Activated CD8-positive, alpha-beta memory T cell treated with anti-CD3 and anti-CD28 coated beads, Interleukin-2, amount 10 ng/mL, durations not matched to agents 7 days and 5 days (primary cell): ENCODE measurements at regions of chr11 and their contacts with region 1.

Region 1: DNA sequence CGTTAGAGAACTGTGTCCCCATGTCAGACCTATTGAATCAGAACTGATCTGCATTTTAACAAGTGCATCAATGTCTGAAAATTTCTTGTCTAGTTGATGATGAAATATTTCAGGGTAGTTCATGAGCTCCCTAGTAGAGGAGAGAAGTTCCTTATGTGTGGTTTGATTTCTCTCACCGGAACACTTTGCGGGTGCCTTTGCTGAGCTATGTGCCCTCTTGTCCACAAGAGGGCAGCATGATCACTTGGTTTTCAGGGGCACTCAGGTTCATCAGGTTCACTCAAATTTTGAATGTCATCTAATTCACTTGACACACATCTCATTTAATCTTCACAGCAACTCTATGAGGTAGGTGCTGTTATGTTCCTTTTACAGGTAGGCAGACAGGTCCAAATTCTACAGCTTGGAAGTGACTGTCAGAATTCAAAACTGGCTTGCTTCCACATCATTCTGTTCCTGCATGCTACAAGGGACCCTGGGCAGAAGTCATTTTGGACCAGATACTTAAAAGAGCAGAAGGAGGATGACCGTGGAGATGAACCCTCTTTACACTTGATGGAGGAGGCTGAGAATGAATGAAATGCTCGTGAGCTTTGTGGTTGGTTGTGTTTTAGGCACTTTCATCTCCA is 55.6 kb downstream of the P4HA3 start:
- DNase-seq: peak; percentile 62
- ATAC-seq: peak; percentile 63
- H3K4me3 Mint-ChIP-seq: no peak overlapping the region
- H3K27ac Mint-ChIP-seq: no peak overlapping the region
- H3K4me1 Mint-ChIP-seq: no peaks in the 10 kb centered on the region
- H3K27me3 Mint-ChIP-seq: no peaks in the 10 kb centered on the region

Region 2: DNA sequence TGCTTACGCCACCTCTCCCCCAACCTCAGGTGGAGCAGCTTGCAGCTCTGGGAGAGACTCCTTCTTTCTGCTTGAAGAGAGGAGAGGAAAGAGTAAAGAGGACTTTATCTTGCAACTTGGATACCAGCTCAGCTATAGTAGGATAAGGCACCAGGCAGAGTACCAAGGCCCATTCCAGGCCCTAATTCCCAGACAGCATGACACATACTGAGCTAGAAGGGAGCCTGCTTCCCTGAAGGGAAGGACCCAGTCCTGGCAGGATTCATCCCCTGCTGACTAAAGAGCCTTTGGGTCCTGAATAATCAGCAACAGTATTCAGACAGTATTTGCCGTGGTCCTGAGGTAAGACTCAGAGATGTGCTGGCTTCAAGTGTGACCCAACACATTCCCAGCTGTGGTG is 43.3 kb before region 1 on chr11:
- CTCF ChIA-PET with region 1: no interaction called
- DNase-seq: no peak
- ATAC-seq: no peak
- H3K4me3 Mint-ChIP-seq: no peak overlapping the region
- H3K27ac Mint-ChIP-seq: no peak overlapping the region
- H3K4me1 Mint-ChIP-seq: no peaks in the 10 kb centered on the region
- H3K27me3 Mint-ChIP-seq: no peaks in the 10 kb centered on the region

Region 3: DNA sequence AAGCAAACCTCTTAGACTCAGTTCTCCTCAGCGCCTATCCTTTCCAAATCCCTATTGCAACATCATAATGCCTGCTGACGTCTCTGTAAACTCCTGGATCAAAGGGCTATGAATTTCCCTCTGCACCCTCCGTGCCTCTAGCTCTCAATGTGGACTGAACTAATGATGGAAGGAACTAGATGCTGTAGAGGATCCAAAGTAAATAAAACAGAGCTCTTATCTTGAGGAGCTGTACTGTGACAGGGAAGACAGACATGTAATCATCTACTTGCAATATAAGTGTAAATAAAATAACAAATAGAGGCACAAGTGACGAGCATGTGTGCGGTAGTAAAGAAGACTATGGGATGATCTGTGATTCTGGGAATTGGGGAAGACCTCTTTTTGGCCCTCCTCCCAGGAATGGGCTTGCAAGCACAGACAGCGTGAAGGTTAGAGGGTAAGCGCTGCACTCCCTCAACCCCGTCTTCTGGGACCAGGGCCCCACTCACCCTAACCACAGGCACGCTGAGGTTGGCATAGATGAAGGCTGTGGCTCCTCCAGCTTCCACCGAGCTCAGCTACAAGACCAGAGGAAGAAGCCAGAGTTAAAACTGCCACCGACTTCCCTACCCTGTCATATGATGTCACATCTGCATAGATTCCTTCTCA is 13.4 kb after region 1 on chr11:
- CTCF ChIA-PET with region 1: interaction called, 10 read pairs
- DNase-seq: peak; percentile 54
- ATAC-seq: peak; percentile 53
- H3K4me3 Mint-ChIP-seq: no peak overlapping the region
- H3K27ac Mint-ChIP-seq: no peak overlapping the region
- H3K4me1 Mint-ChIP-seq: peaks cover 12% of the 10 kb centered on the region
- H3K27me3 Mint-ChIP-seq: peaks cover 25% of the 10 kb centered on the region

Region 4: GRCh38 chr11:74321487-74322188 is 65.8 kb after region 1 on chr11:
- CTCF ChIA-PET with region 1: interaction called, 11 read pairs
- DNase-seq: no peak
- ATAC-seq: no peak
- H3K4me3 Mint-ChIP-seq: no peak overlapping the region
- H3K27ac Mint-ChIP-seq: no peak overlapping the region
- H3K4me1 Mint-ChIP-seq: no peaks in the 10 kb centered on the region
- H3K27me3 Mint-ChIP-seq: peaks cover 34% of the 10 kb centered on the region